Mammary epithelial cell (primary cell): ENCODE measurements at regions of chr15 and their contacts with region 1.

Region 1: GRCh38 chr15:41465822-41466421 is 27.8 kb upstream of the ITPKA start:
- DNase-seq: peak; percentile 37
- H3K4me3 ChIP-seq: no peak overlapping the region
- H3K27ac ChIP-seq: no peak overlapping the region
- H3K4me1 ChIP-seq: no peaks in the 10 kb centered on the region
- H3K27me3 ChIP-seq: no peaks in the 10 kb centered on the region
- CTCF ChIP-seq: peak; percentile 99 to 100

Region 2: GRCh38 chr15:41387646-41388045 is 78.3 kb before region 1 on chr15:
- CTCF ChIA-PET with region 1: no interaction called
- dilution Hi-C with region 1: no loop called
- in situ Hi-C with region 1: no loop called
- intact Hi-C with region 1: no loop called
- DNase-seq: no peak
- H3K4me3 ChIP-seq: no peak overlapping the region
- H3K27ac ChIP-seq: no peak overlapping the region
- H3K4me1 ChIP-seq: no peaks in the 10 kb centered on the region
- H3K27me3 ChIP-seq: no peaks in the 10 kb centered on the region
- CTCF ChIP-seq: no peak

Region 3: GRCh38 chr15:41483115-41483514 is 17.2 kb after region 1 on chr15:
- CTCF ChIA-PET with region 1: interaction called, 25 read pairs
- dilution Hi-C with region 1: no loop called
- in situ Hi-C with region 1: no loop called
- intact Hi-C with region 1: no loop called
- DNase-seq: no peak
- H3K4me3 ChIP-seq: no peak overlapping the region
- H3K27ac ChIP-seq: no peak overlapping the region
- H3K4me1 ChIP-seq: peaks cover 4% of the 10 kb centered on the region
- H3K27me3 ChIP-seq: no peaks in the 10 kb centered on the region
- CTCF ChIP-seq: no peak

Region 4: GRCh38 chr15:41506796-41507341 is 40.9 kb after region 1 on chr15:
- CTCF ChIA-PET with region 1: no interaction called
- dilution Hi-C with region 1: loop called (anchors 5 kb)
- in situ Hi-C with region 1: no loop called
- intact Hi-C with region 1: no loop called
- DNase-seq: no peak
- H3K4me3 ChIP-seq: no peak overlapping the region
- H3K27ac ChIP-seq: no peak overlapping the region
- H3K4me1 ChIP-seq: peaks cover 24% of the 10 kb centered on the region
- H3K27me3 ChIP-seq: peaks cover 19% of the 10 kb centered on the region
- CTCF ChIP-seq: peak in 1 of 2 donors; percentile 39

Region 5: DNA sequence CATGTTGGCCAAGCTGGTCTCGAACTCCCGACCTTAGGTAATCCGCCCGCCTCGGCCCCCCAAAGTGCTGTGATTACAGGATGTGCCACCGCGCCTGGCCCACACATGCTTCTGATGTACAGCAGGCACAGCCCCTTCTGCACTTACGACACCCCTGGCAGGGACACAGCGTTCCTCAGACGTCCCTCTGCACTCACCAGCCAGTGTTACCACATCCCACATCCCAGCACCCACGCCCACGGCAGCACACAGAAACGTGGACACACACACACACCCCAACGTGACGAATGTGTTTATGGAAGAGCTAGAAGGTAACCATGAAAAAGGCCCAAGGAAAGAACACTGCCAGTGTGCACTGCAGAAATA is 78.7 kb after region 1 on chr15:
- CTCF ChIA-PET with region 1: interaction called, 4 read pairs
- dilution Hi-C with region 1: no loop called
- in situ Hi-C with region 1: no loop called
- intact Hi-C with region 1: loop called (anchors 5 kb)
- DNase-seq: no peak
- H3K4me3 ChIP-seq: peak overlapping the region in 1 of 3 experiments; percentile 12
- H3K27ac ChIP-seq: no peak overlapping the region
- H3K4me1 ChIP-seq: peaks cover 8% of the 10 kb centered on the region
- H3K27me3 ChIP-seq: no peaks in the 10 kb centered on the region
- CTCF ChIP-seq: no peak

Region 6: GRCh38 chr15:41585127-41586047 is 119.5 kb after region 1 on chr15:
- CTCF ChIA-PET with region 1: no interaction called
- dilution Hi-C with region 1: no loop called
- in situ Hi-C with region 1: no loop called
- intact Hi-C with region 1: loop called (anchors 10 kb)
- DNase-seq: peak; percentile 55
- H3K4me3 ChIP-seq: peak overlapping the region; percentile 6 to 45 (median 34)
- H3K27ac ChIP-seq: no peak overlapping the region
- H3K4me1 ChIP-seq: peaks cover 12% of the 10 kb centered on the region
- H3K27me3 ChIP-seq: no peaks in the 10 kb centered on the region
- CTCF ChIP-seq: peak; percentile 11 to 26

Region 7: GRCh38 chr15:41904541-41905005 is 438.7 kb after region 1 on chr15:
- CTCF ChIA-PET with region 1: no interaction called
- dilution Hi-C with region 1: no loop called
- in situ Hi-C with region 1: no loop called
- intact Hi-C with region 1: loop called (anchors 5 kb)
- DNase-seq: peak; percentile 42
- H3K4me3 ChIP-seq: no peak overlapping the region
- H3K27ac ChIP-seq: no peak overlapping the region
- H3K4me1 ChIP-seq: no peaks in the 10 kb centered on the region
- H3K27me3 ChIP-seq: no peaks in the 10 kb centered on the region
- CTCF ChIP-seq: peak; percentile 80 to 88